ENCODE measurements at regions of chr19 and their contacts with region 1.

Region 1: DNA sequence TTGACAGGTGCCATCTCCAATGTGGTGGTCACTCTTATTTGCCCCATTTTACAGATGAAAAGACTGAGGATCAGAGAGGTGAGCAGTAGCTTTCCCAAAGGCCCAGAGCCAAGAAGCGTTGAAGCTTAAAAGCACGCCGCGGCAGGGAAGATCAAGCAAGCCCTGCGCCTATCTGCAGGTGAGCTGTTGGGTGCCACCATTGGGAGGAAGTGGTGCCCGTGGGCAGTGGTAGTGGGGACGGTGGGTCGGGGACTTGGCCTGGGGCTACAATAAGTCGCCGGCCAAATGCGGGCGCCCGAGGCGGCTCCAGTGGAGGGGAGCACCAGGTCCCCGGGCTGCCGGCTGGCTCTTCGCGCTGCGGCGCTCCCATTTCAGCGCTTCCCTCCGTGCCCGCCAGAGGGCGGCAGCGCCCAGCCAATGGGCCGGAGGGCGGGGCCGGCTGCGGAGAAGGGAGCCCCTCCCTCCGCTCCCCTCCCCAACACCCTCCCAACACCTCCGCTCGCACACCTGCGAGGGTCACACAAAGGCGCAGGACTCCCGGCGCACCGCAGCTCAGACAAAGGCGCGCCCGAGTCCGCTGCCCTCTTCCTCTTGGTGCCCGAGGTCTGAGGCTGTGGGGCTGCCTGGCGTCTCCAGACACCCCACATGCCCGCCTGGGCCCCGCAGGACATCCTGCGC is 744 bp upstream of the POU2F2 start:
- DNase-seq: peak; percentile 56
- H3K4me3 ChIP-seq: peak overlapping the region in 1 of 2 donors; percentile 18
- H3K27ac ChIP-seq: no peak overlapping the region
- H3K4me1 ChIP-seq: no peaks in the 10 kb centered on the region
- H3K27me3 ChIP-seq: no peaks in the 10 kb centered on the region
- CTCF ChIP-seq: peak; percentile 83 to 95 (median 89)
- POLR2A ChIP-seq: no peak

Region 2: DNA sequence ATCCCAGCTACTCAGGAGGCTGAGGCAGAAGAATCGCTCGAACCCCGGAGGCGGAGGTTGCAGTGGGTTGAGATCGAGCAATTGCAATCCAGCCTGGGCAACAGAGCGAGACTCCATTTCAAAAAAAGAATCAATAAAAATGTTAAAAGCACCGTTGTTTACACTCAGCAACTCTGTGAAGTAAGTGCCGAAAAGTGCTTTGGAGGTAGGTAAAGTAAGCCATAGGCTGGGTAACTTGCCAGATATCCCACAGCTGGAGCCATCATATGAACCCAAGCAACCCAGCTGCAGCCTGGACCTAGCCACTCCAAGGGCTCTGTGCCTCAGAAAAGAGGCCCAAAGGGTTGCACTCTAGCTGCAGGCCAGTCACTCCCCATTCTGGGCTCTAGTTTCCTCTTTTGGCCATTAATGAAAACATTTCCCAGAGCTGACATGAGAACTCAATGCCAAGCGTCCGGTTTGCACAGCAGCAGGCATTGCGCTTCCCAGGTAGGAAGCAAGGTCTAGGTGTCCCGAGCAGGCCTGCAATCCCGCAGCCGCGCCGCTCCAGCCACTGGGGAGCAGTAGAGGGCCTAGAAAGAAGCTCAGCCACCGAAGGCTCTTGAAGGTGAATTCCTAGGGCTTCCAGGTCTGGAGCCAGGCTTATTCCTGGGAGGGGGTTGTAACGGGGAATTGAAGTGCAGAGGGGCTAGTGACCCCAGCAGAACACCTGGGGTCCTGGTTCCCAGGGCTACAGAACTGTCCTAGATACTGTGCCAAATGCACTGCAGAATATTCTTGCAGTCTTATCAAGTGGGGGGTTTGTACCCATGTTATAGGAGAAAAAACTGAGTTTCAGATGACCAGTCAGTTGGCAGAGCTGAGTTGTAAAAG is 260.0 kb before region 1 on chr19:
- intact Hi-C with region 1: no loop called
- DNase-seq: peak; percentile 75
- H3K4me3 ChIP-seq: no peak overlapping the region
- H3K27ac ChIP-seq: no peak overlapping the region
- H3K4me1 ChIP-seq: no peaks in the 10 kb centered on the region
- H3K27me3 ChIP-seq: no peaks in the 10 kb centered on the region
- CTCF ChIP-seq: peak in 3 of 4 experiments; percentile 57 to 78 (median 74)
- POLR2A ChIP-seq: no peak

Region 3: GRCh38 chr19:42184401-42184861 is 51.4 kb after region 1 on chr19:
- intact Hi-C with region 1: loop called (anchors 2 kb)
- DNase-seq: peak; percentile 55
- H3K4me3 ChIP-seq: no peak overlapping the region
- H3K27ac ChIP-seq: no peak overlapping the region
- H3K4me1 ChIP-seq: no peaks in the 10 kb centered on the region
- H3K27me3 ChIP-seq: peaks cover 4% of the 10 kb centered on the region
- CTCF ChIP-seq: peak; percentile 80 to 90 (median 86)
- POLR2A ChIP-seq: no peak